GM13977 (cell line): ENCODE measurements at regions of chr1 and their contacts with region 1.

Region 1: DNA sequence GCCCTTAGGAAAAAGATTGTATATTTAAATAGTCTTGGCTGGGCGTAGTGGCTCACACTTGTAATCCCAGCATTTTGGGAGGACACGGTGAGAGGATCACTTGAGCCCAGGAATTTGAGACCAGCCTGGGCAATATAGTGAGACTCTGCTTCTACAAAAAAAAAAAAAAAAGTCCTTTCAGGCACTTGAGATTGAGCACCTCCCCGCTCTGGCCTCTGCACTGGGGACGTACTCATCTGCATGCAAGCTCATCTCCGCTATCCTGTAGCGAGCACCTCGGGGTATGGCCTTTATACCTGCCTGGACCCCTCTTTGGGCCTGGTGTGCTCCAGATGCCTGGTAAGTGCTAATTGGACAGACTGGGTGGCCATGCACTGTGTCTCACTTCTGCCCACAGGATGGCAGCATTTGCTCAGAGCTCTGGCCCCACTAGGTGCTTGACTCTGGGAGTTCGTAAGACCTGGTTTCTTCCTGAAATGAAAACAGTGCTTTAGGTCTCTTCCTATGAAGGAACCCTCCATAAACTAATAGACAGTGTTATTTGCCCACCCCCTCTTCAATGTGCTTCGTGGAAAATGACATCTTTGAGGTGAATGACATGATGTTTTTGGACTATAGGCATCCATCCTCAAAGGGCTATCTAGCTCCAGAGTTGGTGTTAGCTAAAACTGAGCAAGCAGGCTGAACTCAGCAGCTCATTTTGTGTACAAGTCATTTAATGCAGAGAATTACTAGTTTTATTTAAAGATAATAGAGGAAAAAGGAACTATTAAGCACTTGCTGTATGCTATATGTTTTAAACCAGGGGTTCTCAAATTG is 61.7 kb upstream of the ADAR start:
- DNase-seq: peak; percentile 92
- CTCF ChIP-seq: peak; percentile 92

Region 2: GRCh38 chr1:154344977-154345837 is 324.5 kb before region 1 on chr1:
- in situ Hi-C with region 1: no loop called
- DNase-seq: no peak
- CTCF ChIP-seq: peak; percentile 65

Region 3: GRCh38 chr1:154870115-154870571 is 200.5 kb after region 1 on chr1 and contains the start of gene KCNN3:
- in situ Hi-C with region 1: loop called (anchors 10 kb)
- DNase-seq: peak; percentile 97
- CTCF ChIP-seq: no peak

Region 4: GRCh38 chr1:155050560-155051341 is 381.1 kb after region 1 on chr1 and contains the start of gene ADAM15:
- in situ Hi-C with region 1: loop called (anchors 25 kb)
- DNase-seq: peak; percentile 99
- CTCF ChIP-seq: peak; percentile 98